MCF 10A (cell line): ENCODE measurements at regions of chr1 and their contacts with region 1.

Region 1: GRCh38 chr1:64933296-64934070 is 32.9 kb downstream of the JAK1 start:
- DNase-seq: peak; percentile 75
- H3K4me3 Mint-ChIP-seq: peak overlapping the region; percentile 11
- H3K27ac Mint-ChIP-seq: peak overlapping the region; percentile 91
- H3K4me1 Mint-ChIP-seq: peaks cover 28% of the 10 kb centered on the region
- H3K27me3 Mint-ChIP-seq: no peaks in the 10 kb centered on the region
- CTCF ChIP-seq: no peak

Region 2: DNA sequence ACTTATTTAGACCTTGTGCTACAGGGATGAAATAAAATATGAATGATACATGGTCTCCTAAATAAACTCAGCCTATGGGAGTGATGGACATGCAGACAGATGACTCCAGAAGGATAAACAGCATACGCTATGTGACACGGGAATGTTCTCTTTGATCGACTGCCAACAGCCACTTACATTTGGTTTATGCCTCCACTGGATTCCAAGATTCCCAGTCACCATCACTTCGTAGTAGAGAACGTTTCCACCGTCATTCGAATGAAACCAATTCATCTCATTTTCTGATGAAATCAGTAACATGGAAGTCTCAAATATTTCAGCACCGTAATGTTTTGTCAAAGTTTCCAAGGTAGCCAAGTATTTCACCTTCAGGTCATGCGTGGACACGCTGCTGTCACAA is 66.8 kb before region 1 on chr1:
- CTCF ChIA-PET with region 1: no interaction called
- POLR2A ChIA-PET with region 1: no interaction called
- intact Hi-C with region 1: no loop called
- DNase-seq: no peak
- H3K4me3 Mint-ChIP-seq: no peak overlapping the region
- H3K27ac Mint-ChIP-seq: no peak overlapping the region
- H3K4me1 Mint-ChIP-seq: no peaks in the 10 kb centered on the region
- H3K27me3 Mint-ChIP-seq: no peaks in the 10 kb centered on the region
- CTCF ChIP-seq: no peak

Region 3: GRCh38 chr1:64898107-64898845 is 35.2 kb before region 1 on chr1:
- CTCF ChIA-PET with region 1: no interaction called
- POLR2A ChIA-PET with region 1: interaction called, 14 read pairs
- intact Hi-C with region 1: no loop called
- DNase-seq: peak; percentile 93
- H3K4me3 Mint-ChIP-seq: peak overlapping the region; percentile 32
- H3K27ac Mint-ChIP-seq: no peak overlapping the region
- H3K4me1 Mint-ChIP-seq: peaks cover 34% of the 10 kb centered on the region
- H3K27me3 Mint-ChIP-seq: no peaks in the 10 kb centered on the region
- CTCF ChIP-seq: no peak

Region 4: DNA sequence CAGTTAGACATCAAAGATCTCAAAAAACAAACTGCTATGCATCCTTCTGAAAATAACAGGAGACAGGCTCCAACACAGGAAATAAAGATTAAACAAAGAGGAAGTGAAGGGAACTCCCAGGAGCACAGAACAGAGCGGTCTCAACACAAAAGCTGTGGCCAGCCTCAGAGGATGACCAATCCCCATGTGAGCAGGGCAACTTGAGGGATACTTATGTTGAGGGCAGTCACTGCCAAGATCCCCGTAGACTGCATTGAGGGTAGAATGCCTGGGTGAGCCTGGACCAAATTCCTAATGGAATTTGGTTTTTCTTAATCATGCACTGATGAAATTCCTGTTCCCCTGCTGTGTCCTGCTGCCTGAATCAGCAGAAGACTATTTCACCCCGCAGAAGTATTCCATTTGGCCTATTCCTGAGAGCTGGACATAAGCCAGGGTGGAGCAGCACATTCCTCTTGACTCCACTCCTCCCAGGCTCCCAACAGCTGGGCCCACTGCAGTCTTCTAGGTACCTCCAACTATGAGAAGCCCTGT is 16.1 kb before region 1 on chr1:
- CTCF ChIA-PET with region 1: interaction called, 4 read pairs
- POLR2A ChIA-PET with region 1: interaction called, 37 read pairs
- intact Hi-C with region 1: loop called (anchors 2 kb)
- DNase-seq: peak; percentile 93
- H3K4me3 Mint-ChIP-seq: no peak overlapping the region
- H3K27ac Mint-ChIP-seq: peak overlapping the region; percentile 80
- H3K4me1 Mint-ChIP-seq: peaks cover 49% of the 10 kb centered on the region
- H3K27me3 Mint-ChIP-seq: no peaks in the 10 kb centered on the region
- CTCF ChIP-seq: no peak

Region 5: GRCh38 chr1:64923294-64923721 is 10.2 kb before region 1 on chr1:
- CTCF ChIA-PET with region 1: interaction called, 4 read pairs
- POLR2A ChIA-PET with region 1: interaction called, 37 read pairs
- intact Hi-C with region 1: loop called (anchors 2 kb)
- DNase-seq: no peak
- H3K4me3 Mint-ChIP-seq: no peak overlapping the region
- H3K27ac Mint-ChIP-seq: no peak overlapping the region
- H3K4me1 Mint-ChIP-seq: peaks cover 35% of the 10 kb centered on the region
- H3K27me3 Mint-ChIP-seq: no peaks in the 10 kb centered on the region
- CTCF ChIP-seq: no peak

Region 6: GRCh38 chr1:64948905-64949833 is 15.7 kb after region 1 on chr1:
- CTCF ChIA-PET with region 1: interaction called, 3 read pairs
- POLR2A ChIA-PET with region 1: interaction called, 11 read pairs
- intact Hi-C with region 1: loop called (anchors 2 kb)
- DNase-seq: peak; percentile 79
- H3K4me3 Mint-ChIP-seq: peak overlapping the region; percentile 18
- H3K27ac Mint-ChIP-seq: peak overlapping the region; percentile 81
- H3K4me1 Mint-ChIP-seq: peaks cover 44% of the 10 kb centered on the region
- H3K27me3 Mint-ChIP-seq: no peaks in the 10 kb centered on the region
- CTCF ChIP-seq: no peak